ENCODE measurements at regions of chrX and their contacts with region 1.

Region 1: GRCh38 chrX:34300871-34301270 is 168.8 kb upstream of the FAM47A start:
- DNase-seq: no peak
- ATAC-seq: no peak
- H3K4me3 ChIP-seq: no peak overlapping the region
- H3K27ac ChIP-seq: no peak overlapping the region
- H3K4me1 ChIP-seq: no peaks in the 10 kb centered on the region
- H3K27me3 ChIP-seq: peaks cover 0 to 2% (median 0%) of the 10 kb centered on the region in 3 donors
- CTCF ChIP-seq: peak; percentile 59

Region 2: GRCh38 chrX:33434256-33435092 is 866.4 kb before region 1 on chrX:
- intact Hi-C with region 1: loop called (anchors 5 kb)
- DNase-seq: peak in 1 of 2 donors; percentile 30
- ATAC-seq: peak; percentile 59 to 66 (median 62)
- H3K4me3 ChIP-seq: no peak overlapping the region
- H3K27ac ChIP-seq: no peak overlapping the region
- H3K4me1 ChIP-seq: no peaks in the 10 kb centered on the region
- H3K27me3 ChIP-seq: no peaks in the 10 kb centered on the region
- CTCF ChIP-seq: peak; percentile 94

Region 3: GRCh38 chrX:34130980-34131744 is 169.7 kb before region 1 on chrX:
- intact Hi-C with region 1: no loop called
- DNase-seq: peak in 1 of 2 donors; percentile 17
- ATAC-seq: no peak
- H3K4me3 ChIP-seq: no peak overlapping the region
- H3K27ac ChIP-seq: no peak overlapping the region
- H3K4me1 ChIP-seq: no peaks in the 10 kb centered on the region
- H3K27me3 ChIP-seq: no peaks in the 10 kb centered on the region
- CTCF ChIP-seq: no peak

Region 4: GRCh38 chrX:34826966-34827365 is 526.1 kb after region 1 on chrX:
- intact Hi-C with region 1: no loop called
- DNase-seq: no peak
- ATAC-seq: no peak
- H3K4me3 ChIP-seq: no peak overlapping the region
- H3K27ac ChIP-seq: no peak overlapping the region
- H3K4me1 ChIP-seq: no peaks in the 10 kb centered on the region
- H3K27me3 ChIP-seq: no peaks in the 10 kb centered on the region
- CTCF ChIP-seq: no peak

Measured in psoas muscle (tissue), 8 donors.